SK-N-SH (cell line): ENCODE measurements at regions of chr14 and their contacts with region 1.

Region 1: DNA sequence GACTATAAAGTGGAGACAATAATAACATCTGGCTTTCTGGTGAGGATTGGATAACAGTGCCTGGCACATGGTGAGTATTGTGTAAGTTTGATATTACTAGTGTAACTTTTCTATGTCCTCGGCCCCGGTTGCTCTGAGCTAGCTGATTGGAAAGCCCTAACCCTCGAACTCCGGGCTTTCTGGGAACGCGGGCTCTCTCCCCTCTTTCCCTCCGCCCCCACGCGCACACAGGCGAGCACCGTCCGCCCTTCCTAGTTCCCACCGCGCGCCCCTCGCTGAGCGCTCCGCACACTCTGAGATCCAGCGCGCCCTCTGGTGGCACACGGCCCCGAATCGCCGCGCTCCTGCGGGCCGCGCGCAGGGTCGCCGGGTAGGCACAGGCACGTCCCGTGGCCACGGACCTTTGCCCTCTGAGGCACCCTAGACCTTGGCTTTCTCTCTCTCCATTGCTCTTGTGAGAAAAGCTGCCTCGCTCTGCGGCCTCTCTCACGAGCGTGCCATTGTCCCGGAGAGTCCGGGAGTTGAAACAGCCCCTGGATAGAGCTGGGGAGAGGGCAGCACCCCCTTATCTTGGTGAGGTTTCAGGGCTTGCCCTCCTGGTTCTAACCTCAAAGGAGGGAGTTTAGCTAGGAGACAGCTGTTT is 23.2 kb upstream of the ESRRB start:
- DNase-seq: peak; percentile 90
- H3K4me3 ChIP-seq: peak overlapping the region; percentile 9 to 46; a peak in 2 of 4 replicates
- H3K27ac ChIP-seq: no peak overlapping the region
- H3K4me1 ChIP-seq: peaks cover 7 to 12% of the 10 kb centered on the region in 2 experiments; a peak in 3 of 4 replicates
- H3K27me3 ChIP-seq: peaks cover 22% of the 10 kb centered on the region; the same call in 1 of the 2 replicates
- CTCF ChIP-seq: peak; percentile 80
- EP300 ChIP-seq: no peak
- RAD21 ChIP-seq: peak; percentile 76

Region 2: DNA sequence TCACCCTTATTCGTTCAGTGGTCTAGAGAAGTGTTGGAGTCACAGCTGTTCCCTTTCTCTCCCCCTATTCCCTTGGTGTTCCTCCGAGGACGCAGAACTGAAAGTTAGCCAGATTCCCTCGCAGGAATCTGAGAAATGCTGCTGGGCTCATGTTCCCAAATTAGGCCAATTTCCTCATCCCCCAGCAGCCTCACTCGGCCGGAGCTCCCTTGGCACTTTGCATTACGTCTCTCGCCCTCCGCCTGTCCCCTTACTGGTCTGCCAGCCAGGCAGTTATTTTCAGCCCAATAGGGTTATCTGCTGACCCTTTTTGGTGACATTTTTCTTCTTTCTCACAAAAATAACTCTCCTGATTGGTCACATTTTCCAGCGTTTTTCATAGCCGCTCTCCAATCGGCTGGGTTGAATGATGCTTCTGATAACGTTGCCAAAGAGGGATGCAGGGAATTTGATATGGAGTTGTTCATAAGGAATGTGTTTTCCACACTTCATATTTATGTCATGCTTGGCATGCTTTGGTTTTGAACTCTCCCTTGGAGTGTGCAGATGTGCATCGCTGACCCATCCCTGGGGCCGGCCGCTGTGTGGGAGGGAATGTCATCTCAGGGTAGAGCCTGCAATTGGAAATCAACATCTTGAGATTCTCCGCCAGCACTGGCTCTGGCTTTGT is 357.3 kb before region 1 on chr14:
- CTCF ChIA-PET with region 1: no interaction called
- POLR2A ChIA-PET with region 1: no interaction called
- DNase-seq: no peak
- H3K4me3 ChIP-seq: no peak overlapping the region
- H3K27ac ChIP-seq: no peak overlapping the region
- H3K4me1 ChIP-seq: peaks cover 0 to under 1% of the 10 kb centered on the region in 2 experiments; a peak in 1 of 4 replicates
- H3K27me3 ChIP-seq: no peaks in the 10 kb centered on the region
- CTCF ChIP-seq: no peak
- EP300 ChIP-seq: no peak
- RAD21 ChIP-seq: no peak

Region 3: GRCh38 chr14:76073717-76074116 is 279.0 kb before region 1 on chr14:
- CTCF ChIA-PET with region 1: interaction called, 10 read pairs
- POLR2A ChIA-PET with region 1: no interaction called
- DNase-seq: peak; percentile 82
- H3K4me3 ChIP-seq: no peak overlapping the region
- H3K27ac ChIP-seq: no peak overlapping the region
- H3K4me1 ChIP-seq: peaks cover 0 to 17% of the 10 kb centered on the region in 2 experiments; a peak in 2 of 4 replicates
- H3K27me3 ChIP-seq: no peaks in the 10 kb centered on the region
- CTCF ChIP-seq: no peak
- EP300 ChIP-seq: peak in 1 of 2 experiments; percentile 82; a peak in 2 of 4 replicates
- RAD21 ChIP-seq: no peak

Region 4: DNA sequence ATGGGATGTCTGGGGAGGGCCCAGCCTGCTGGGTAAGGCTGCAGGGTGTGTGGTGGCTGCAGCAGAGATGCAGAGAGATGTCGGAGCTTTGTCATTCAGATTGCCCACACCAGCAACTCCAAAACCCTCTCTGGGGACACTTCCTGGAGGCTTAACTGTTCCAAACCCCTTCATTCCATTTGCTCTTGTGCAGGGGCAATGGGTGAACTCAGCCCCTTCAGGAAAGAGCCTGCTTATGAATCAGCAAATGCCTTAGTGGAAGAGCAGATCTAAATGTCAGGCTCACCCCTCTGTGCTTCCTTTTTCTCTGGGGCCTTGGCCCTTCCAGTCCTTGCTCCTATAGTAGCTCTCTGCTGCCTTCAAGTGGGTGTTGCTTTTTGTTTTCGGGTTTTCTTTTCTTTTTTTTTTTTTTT is 237.7 kb before region 1 on chr14:
- CTCF ChIA-PET with region 1: interaction called, 10 read pairs
- POLR2A ChIA-PET with region 1: no interaction called
- DNase-seq: no peak
- H3K4me3 ChIP-seq: no peak overlapping the region
- H3K27ac ChIP-seq: no peak overlapping the region
- H3K4me1 ChIP-seq: peaks cover 0 to 13% of the 10 kb centered on the region in 2 experiments; a peak in 2 of 4 replicates
- H3K27me3 ChIP-seq: peaks cover 8% of the 10 kb centered on the region; the same call in 1 of the 2 replicates
- CTCF ChIP-seq: no peak
- EP300 ChIP-seq: no peak
- RAD21 ChIP-seq: 0 out of 2 replicates have a peak, but pooled peaks have one; percentile 25

Region 5: GRCh38 chr14:76227448-76228050 is 125.2 kb before region 1 on chr14:
- CTCF ChIA-PET with region 1: no interaction called
- POLR2A ChIA-PET with region 1: no interaction called
- DNase-seq: no peak
- H3K4me3 ChIP-seq: no peak overlapping the region
- H3K27ac ChIP-seq: no peak overlapping the region
- H3K4me1 ChIP-seq: no peaks in the 10 kb centered on the region
- H3K27me3 ChIP-seq: no peaks in the 10 kb centered on the region
- CTCF ChIP-seq: no peak
- EP300 ChIP-seq: no peak
- RAD21 ChIP-seq: no peak

Region 6: GRCh38 chr14:76337635-76338545 is 14.9 kb before region 1 on chr14:
- CTCF ChIA-PET with region 1: interaction called, 57 read pairs
- POLR2A ChIA-PET with region 1: no interaction called
- DNase-seq: peak; percentile 85
- H3K4me3 ChIP-seq: peak overlapping the region; percentile 34 to 38
- H3K27ac ChIP-seq: peak overlapping the region in 1 of 2 experiments; percentile 50; a peak in 1 of 4 replicates
- H3K4me1 ChIP-seq: peaks cover 0 to 20% of the 10 kb centered on the region in 2 experiments; a peak in 1 of 4 replicates
- H3K27me3 ChIP-seq: no peaks in the 10 kb centered on the region; the same call in 1 of the 2 replicates
- CTCF ChIP-seq: no peak
- EP300 ChIP-seq: peak in 1 of 2 experiments; percentile 80; a peak in 2 of 4 replicates
- RAD21 ChIP-seq: no peak

Region 7: DNA sequence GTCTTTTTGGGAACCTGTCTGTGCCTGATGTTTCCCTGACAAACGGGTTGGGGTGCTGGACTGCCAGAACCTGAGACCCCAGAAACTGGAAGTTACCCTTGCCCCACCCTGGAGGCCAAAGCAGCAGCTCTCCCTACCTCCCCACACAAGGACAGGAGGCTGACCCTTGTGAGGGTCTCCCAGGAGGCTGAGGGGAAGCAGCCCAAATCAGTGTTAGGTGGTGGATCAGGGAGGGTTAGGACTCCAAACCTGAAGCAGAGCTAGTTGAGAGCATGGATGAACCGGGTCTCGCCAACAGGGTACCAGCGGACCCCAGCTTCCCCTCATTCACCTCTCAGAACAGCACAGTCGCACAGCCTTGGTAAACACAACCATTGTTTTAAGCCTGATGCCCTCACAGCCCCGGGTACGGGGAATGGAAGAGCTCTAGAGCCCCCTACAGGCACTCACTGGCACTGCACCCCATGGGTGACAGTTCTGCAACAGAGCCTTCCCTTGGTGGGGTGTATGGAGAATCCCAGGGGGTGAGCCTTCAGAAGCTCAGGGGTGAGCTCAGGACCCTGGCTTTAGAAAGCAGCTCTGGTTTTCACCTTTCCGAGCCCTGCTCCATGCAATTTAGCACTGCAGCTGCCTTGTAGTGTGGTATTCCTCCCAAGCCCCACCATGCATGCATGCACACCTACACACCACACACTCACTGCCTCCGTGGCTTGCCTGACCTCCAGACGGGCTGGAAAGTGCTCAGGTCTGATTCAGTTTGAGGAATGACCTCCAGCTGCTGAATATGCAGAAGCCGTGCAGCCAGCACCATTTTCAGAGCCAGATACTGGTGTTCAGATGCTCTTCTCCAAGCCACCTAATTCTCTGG is 34.4 kb after region 1 on chr14:
- CTCF ChIA-PET with region 1: interaction called, 37 read pairs
- POLR2A ChIA-PET with region 1: no interaction called
- DNase-seq: peak; percentile 90
- H3K4me3 ChIP-seq: peak overlapping the region in 1 of 2 experiments; percentile 50; a peak in 1 of 4 replicates
- H3K27ac ChIP-seq: no peak overlapping the region
- H3K4me1 ChIP-seq: no peaks in the 10 kb centered on the region; a peak in 1 of 4 replicates
- H3K27me3 ChIP-seq: peaks cover 46% of the 10 kb centered on the region
- CTCF ChIP-seq: peak; percentile 97
- EP300 ChIP-seq: no peak
- RAD21 ChIP-seq: peak; percentile 95

Region 8: DNA sequence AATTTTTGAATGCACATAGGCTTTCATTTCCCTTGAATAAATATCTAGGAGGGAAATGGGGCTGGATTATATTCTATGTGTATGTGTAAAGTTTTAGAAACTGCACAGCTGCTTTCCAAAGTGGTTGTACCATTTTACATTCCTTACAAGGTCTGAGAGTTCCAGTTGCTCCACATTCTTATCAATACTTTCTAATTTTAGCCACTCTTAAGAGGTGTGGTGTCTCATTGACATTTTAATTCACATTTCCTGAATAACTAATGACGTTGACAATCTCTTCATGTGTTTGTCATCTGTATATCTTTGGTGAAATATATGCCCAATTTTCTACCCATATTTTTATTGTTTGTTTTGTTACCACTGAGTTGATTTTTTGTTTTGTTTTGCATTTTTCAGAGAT is 333.9 kb after region 1 on chr14:
- CTCF ChIA-PET with region 1: no interaction called
- POLR2A ChIA-PET with region 1: no interaction called
- DNase-seq: no peak
- H3K4me3 ChIP-seq: no peak overlapping the region
- H3K27ac ChIP-seq: no peak overlapping the region
- H3K4me1 ChIP-seq: no peaks in the 10 kb centered on the region
- H3K27me3 ChIP-seq: no peaks in the 10 kb centered on the region
- CTCF ChIP-seq: no peak
- EP300 ChIP-seq: no peak
- RAD21 ChIP-seq: no peak